Sigmoid colon (tissue), 7 donors: ENCODE measurements at regions of chr15 and their contacts with region 1.

Region 1: GRCh38 chr15:75639709-75640482 is at the start of gene IMP3:
- DNase-seq: peak; percentile 98
- H3K4me3 ChIP-seq: peak within 1 kb of the TSS; percentile 76 to 84 (median 81)
- H3K27ac ChIP-seq: peak within 1 kb of the TSS; percentile 88 to 93 (median 92)
- H3K4me1 ChIP-seq: peaks cover 0 to 41% (median 29%) of the 10 kb centered on the region in 4 donors
- H3K27me3 ChIP-seq: no peaks in the 10 kb centered on the region
- CTCF ChIP-seq: no peak
- EP300 ChIP-seq: peak in 1 of 4 donors; percentile 27
- POLR2A ChIP-seq: peak; percentile 93 to 97
- total RNA-seq, gene IMP3: 55.4 to 117 (median 84.3) TPM

Region 2: DNA sequence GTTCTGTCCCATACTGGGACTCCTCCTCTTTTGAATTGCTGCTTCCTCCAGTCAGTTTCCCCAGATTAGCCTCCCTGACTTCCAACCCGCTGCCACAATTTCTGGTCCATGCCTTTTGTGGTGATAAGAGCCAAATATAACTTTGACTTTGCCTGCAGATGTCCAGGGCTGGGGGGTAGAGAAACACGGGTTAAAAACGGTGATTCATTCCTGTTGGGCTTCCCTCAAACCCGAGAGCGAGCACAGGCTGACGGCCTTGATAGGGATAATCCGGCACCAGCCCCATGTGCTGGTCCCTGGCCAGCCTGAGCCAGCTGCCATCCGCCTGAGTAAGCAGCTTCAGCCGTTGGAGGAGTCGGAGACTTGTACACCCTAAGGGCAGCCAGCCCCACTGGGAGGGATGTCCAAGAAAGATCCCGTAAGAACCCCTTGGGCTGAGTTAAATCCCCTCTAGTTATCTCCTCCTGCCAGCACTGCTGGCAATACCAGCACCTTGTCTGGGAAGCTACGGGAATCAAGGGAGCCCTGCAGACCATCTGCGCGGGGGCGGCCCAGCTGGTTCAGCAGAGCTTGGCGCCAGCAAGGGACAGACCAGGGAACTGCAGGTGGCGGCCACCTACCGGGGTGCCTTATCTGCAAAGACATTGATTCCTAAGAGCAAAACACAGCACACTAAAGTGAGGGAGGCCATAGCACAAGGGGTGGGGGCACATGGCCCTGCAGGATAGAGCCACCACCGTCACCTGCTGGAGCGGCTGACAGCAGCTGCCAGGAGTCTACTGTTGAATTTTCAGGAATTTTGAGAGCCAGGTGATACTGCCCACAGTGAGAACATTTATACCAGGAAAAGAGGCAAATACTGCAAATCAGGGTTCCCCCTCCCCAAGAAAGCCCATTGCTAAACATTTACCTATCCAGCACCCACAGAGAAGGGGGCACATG is 54.6 kb after region 1 on chr15:
- intact Hi-C with region 1: no loop called
- DNase-seq: peak; percentile 96
- H3K4me3 ChIP-seq: no peak overlapping the region
- H3K27ac ChIP-seq: peak overlapping the region; percentile 95 to 99 (median 97)
- H3K4me1 ChIP-seq: peaks cover 0 to 71% (median 65%) of the 10 kb centered on the region in 4 donors
- H3K27me3 ChIP-seq: no peaks in the 10 kb centered on the region
- CTCF ChIP-seq: peak in 3 of 4 experiments; percentile 20 to 30 (median 23)
- EP300 ChIP-seq: peak in 1 of 4 donors; percentile 78
- POLR2A ChIP-seq: no peak

Region 3: GRCh38 chr15:75732809-75733451 is 93.0 kb after region 1 on chr15:
- intact Hi-C with region 1: loop called (anchors 5 kb)
- DNase-seq: peak; percentile 89
- H3K4me3 ChIP-seq: no peak overlapping the region
- H3K27ac ChIP-seq: peak overlapping the region in 3 of 4 donors; percentile 57 to 87 (median 81)
- H3K4me1 ChIP-seq: peaks cover 0 to 57% (median 46%) of the 10 kb centered on the region in 4 donors
- H3K27me3 ChIP-seq: no peaks in the 10 kb centered on the region
- CTCF ChIP-seq: peak; percentile 93 to 98 (median 95)
- EP300 ChIP-seq: no peak
- POLR2A ChIP-seq: no peak

Region 4: GRCh38 chr15:75801859-75802593 is 162.1 kb after region 1 on chr15:
- intact Hi-C with region 1: loop called (anchors 5 kb)
- DNase-seq: peak; percentile 90
- H3K4me3 ChIP-seq: peak overlapping the region in 3 of 4 donors; percentile 13 to 29 (median 27)
- H3K27ac ChIP-seq: no peak overlapping the region
- H3K4me1 ChIP-seq: peaks cover 0 to 9% (median 7%) of the 10 kb centered on the region in 4 donors
- H3K27me3 ChIP-seq: peaks cover 0 to 20% (median 0%) of the 10 kb centered on the region in 3 donors
- CTCF ChIP-seq: peak; percentile 71 to 95 (median 90)
- EP300 ChIP-seq: no peak
- POLR2A ChIP-seq: no peak